CD8-positive, alpha-beta T cell (primary cell): ENCODE measurements at regions of chr1 and their contacts with region 1.

Region 1: DNA sequence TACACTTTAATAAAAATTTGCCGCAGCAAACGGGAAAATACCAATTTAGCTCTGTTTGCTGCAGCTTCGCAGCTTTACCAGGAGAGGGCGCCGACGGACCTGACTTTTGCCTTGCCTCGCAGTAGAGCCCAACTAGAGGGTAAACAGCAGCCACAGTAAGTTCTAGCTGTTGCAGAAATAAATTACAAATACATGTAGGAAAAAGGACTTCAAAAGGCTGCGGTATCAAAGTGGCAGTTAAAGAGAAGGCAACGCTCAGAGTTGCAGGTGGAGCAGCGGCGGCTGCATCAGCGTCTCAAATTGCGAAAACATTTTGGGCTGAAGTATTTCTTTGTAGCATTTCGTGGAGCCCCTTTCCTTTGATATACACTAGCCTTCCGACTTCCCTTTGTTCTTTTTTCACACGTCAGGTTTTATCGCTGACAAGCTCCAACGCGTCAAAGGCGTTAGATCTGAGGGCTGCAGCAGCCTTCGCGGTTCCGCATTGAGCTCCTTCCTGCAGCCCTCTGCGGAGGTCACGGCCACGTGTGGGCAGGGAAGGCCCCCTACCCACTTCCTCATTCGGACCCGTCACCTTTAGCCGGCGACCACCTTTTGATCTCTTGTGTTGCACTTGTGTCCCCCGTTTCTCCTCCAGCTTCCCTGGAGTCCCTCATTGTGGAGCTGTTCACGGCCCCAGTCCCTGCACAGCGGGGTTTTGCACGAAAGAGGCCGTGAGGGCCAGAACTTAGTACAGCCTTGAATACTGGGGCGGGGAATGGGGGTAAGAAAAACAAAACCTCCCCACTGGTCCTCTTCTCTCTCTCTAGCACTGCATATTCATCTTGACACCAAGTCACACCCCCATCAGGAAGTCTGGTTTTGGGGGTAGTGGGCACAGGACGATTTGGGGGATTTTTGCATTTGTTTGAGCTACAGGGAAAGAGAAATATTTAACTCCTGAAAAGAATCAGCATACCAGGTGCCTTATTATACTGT is 72.8 kb downstream of the S1PR1 start:
- DNase-seq: peak; percentile 57 to 96 (median 80)
- ATAC-seq: peak; percentile 75
- H3K4me3 ChIP-seq: peak overlapping the region; percentile 34 to 44
- H3K4me3 Mint-ChIP-seq: peak overlapping the region; percentile 82
- H3K27ac ChIP-seq: peak overlapping the region; percentile 82 to 87
- H3K27ac Mint-ChIP-seq: peak overlapping the region; percentile 99
- H3K4me1 ChIP-seq: peaks cover 58% of the 10 kb centered on the region
- H3K4me1 Mint-ChIP-seq: peaks cover 73% of the 10 kb centered on the region
- H3K27me3 ChIP-seq: no peaks in the 10 kb centered on the region
- H3K27me3 Mint-ChIP-seq: no peaks in the 10 kb centered on the region
- CTCF ChIP-seq: peak; percentile 85

Region 2: DNA sequence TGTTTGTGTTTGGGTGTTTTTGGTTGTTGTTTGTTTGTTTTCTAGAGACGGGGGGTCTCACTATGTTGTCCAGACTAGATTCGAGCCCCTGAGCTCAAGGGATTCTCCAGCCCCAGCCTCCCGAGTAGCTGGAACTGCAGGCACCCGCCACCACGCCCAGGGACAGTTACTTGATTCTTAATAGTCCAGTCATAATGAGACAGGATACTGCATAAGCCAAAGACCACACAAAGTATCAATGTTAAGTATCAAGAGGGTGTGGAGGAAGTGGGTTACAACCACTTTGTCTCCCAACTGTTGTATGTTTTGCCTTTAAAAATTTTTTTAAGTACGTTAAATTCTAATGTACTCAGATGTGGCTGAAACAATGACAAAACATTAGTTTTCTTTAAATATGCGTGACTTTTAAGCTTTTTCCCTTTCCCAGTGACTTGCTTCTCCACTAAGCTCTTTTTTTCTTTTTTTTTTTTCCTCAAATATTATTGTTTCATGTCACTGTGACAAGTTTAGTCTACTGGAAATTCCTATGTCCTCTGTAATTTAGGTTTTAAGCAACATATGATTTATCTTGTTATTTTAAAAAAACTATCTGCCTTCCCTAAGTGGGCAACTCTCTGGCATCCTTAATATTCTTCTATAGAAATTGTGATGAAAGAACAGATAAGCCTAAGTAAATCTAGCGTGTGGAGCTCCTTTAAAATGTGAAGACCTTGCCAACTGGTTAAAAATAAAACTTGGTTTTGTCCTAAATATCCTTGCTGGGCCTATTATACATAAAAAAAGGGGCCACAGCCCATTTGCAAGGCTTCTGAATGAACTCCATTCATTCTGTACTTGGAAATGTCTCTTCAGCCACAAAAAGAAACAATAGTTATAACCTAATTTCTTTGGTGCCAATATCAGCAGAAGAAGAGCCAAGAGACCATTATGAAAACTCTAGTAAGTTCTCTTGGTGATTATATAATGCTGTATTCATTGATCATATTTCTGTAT is 227.8 kb before region 1 on chr1:
- CTCF ChIA-PET with region 1: no interaction called
- POLR2A ChIA-PET with region 1: no interaction called
- intact Hi-C with region 1: no loop called
- DNase-seq: peak in 8 of 9 experiments; percentile 5 to 75 (median 34)
- ATAC-seq: peak; percentile 93
- H3K4me3 ChIP-seq: no peak overlapping the region
- H3K4me3 Mint-ChIP-seq: peak overlapping the region; percentile 56
- H3K27ac ChIP-seq: peak overlapping the region; percentile 14 to 36
- H3K27ac Mint-ChIP-seq: peak overlapping the region; percentile 85
- H3K4me1 ChIP-seq: peaks cover 35% of the 10 kb centered on the region
- H3K4me1 Mint-ChIP-seq: peaks cover 48% of the 10 kb centered on the region
- H3K27me3 ChIP-seq: no peaks in the 10 kb centered on the region
- H3K27me3 Mint-ChIP-seq: no peaks in the 10 kb centered on the region
- CTCF ChIP-seq: no peak

Region 3: GRCh38 chr1:101136739-101137138 is 172.9 kb before region 1 on chr1:
- CTCF ChIA-PET with region 1: interaction called, 3 read pairs
- POLR2A ChIA-PET with region 1: interaction called, 6 read pairs
- intact Hi-C with region 1: loop called in 1 of 2 experiments (anchors 1 kb)
- DNase-seq: peak in 4 of 9 experiments; percentile 21 to 78 (median 50)
- ATAC-seq: peak; percentile 76
- H3K4me3 ChIP-seq: no peak overlapping the region
- H3K4me3 Mint-ChIP-seq: peak overlapping the region; percentile 13
- H3K27ac ChIP-seq: peak overlapping the region; percentile 12 to 50
- H3K27ac Mint-ChIP-seq: peak overlapping the region; percentile 85
- H3K4me1 ChIP-seq: peaks cover 35% of the 10 kb centered on the region
- H3K4me1 Mint-ChIP-seq: peaks cover 60% of the 10 kb centered on the region
- H3K27me3 ChIP-seq: no peaks in the 10 kb centered on the region
- H3K27me3 Mint-ChIP-seq: no peaks in the 10 kb centered on the region
- CTCF ChIP-seq: peak; percentile 58

Region 4: GRCh38 chr1:101228424-101229134 is 81.0 kb before region 1 on chr1:
- CTCF ChIA-PET with region 1: no interaction called
- POLR2A ChIA-PET with region 1: no interaction called
- intact Hi-C with region 1: no loop called
- DNase-seq: no peak
- ATAC-seq: peak; percentile 44
- H3K4me3 ChIP-seq: no peak overlapping the region
- H3K4me3 Mint-ChIP-seq: no peak overlapping the region
- H3K27ac ChIP-seq: peak overlapping the region in 1 of 2 experiments; percentile 33
- H3K27ac Mint-ChIP-seq: no peak overlapping the region
- H3K4me1 ChIP-seq: no peaks in the 10 kb centered on the region
- H3K4me1 Mint-ChIP-seq: peaks cover 22% of the 10 kb centered on the region
- H3K27me3 ChIP-seq: no peaks in the 10 kb centered on the region
- H3K27me3 Mint-ChIP-seq: no peaks in the 10 kb centered on the region
- CTCF ChIP-seq: no peak

Region 5: GRCh38 chr1:101330427-101331130 is 21.0 kb after region 1 on chr1:
- CTCF ChIA-PET with region 1: interaction called, 44 read pairs
- POLR2A ChIA-PET with region 1: interaction called, 11 read pairs
- intact Hi-C with region 1: loop called in 1 of 2 experiments (anchors 2 kb)
- DNase-seq: no peak
- ATAC-seq: no peak
- H3K4me3 ChIP-seq: no peak overlapping the region
- H3K4me3 Mint-ChIP-seq: no peak overlapping the region
- H3K27ac ChIP-seq: peak overlapping the region in 1 of 2 experiments; percentile 22
- H3K27ac Mint-ChIP-seq: no peak overlapping the region
- H3K4me1 ChIP-seq: no peaks in the 10 kb centered on the region
- H3K4me1 Mint-ChIP-seq: peaks cover 11% of the 10 kb centered on the region
- H3K27me3 ChIP-seq: no peaks in the 10 kb centered on the region
- H3K27me3 Mint-ChIP-seq: no peaks in the 10 kb centered on the region
- CTCF ChIP-seq: no peak

Region 6: GRCh38 chr1:101357444-101357986 is 47.9 kb after region 1 on chr1:
- CTCF ChIA-PET with region 1: interaction called, 136 read pairs
- POLR2A ChIA-PET with region 1: interaction called, 40 read pairs
- intact Hi-C with region 1: loop called (anchors 1 kb)
- DNase-seq: peak; percentile 38 to 92 (median 67)
- ATAC-seq: peak; percentile 100
- H3K4me3 ChIP-seq: no peak overlapping the region
- H3K4me3 Mint-ChIP-seq: no peak overlapping the region
- H3K27ac ChIP-seq: no peak overlapping the region
- H3K27ac Mint-ChIP-seq: peak overlapping the region; percentile 28
- H3K4me1 ChIP-seq: peaks cover 6% of the 10 kb centered on the region
- H3K4me1 Mint-ChIP-seq: peaks cover 8% of the 10 kb centered on the region
- H3K27me3 ChIP-seq: no peaks in the 10 kb centered on the region
- H3K27me3 Mint-ChIP-seq: peaks cover 3% of the 10 kb centered on the region
- CTCF ChIP-seq: peak; percentile 87

Region 7: GRCh38 chr1:101438359-101438758 is 128.7 kb after region 1 on chr1:
- CTCF ChIA-PET with region 1: interaction called, 8 read pairs
- POLR2A ChIA-PET with region 1: no interaction called
- intact Hi-C with region 1: loop called (anchors 1 to 5 kb)
- DNase-seq: peak in 2 of 9 experiments; percentile 17 to 39
- ATAC-seq: no peak
- H3K4me3 ChIP-seq: no peak overlapping the region
- H3K4me3 Mint-ChIP-seq: no peak overlapping the region
- H3K27ac ChIP-seq: no peak overlapping the region
- H3K27ac Mint-ChIP-seq: no peak overlapping the region
- H3K4me1 ChIP-seq: no peaks in the 10 kb centered on the region
- H3K4me1 Mint-ChIP-seq: no peaks in the 10 kb centered on the region
- H3K27me3 ChIP-seq: no peaks in the 10 kb centered on the region
- H3K27me3 Mint-ChIP-seq: peaks cover 7% of the 10 kb centered on the region
- CTCF ChIP-seq: no peak

Region 8: DNA sequence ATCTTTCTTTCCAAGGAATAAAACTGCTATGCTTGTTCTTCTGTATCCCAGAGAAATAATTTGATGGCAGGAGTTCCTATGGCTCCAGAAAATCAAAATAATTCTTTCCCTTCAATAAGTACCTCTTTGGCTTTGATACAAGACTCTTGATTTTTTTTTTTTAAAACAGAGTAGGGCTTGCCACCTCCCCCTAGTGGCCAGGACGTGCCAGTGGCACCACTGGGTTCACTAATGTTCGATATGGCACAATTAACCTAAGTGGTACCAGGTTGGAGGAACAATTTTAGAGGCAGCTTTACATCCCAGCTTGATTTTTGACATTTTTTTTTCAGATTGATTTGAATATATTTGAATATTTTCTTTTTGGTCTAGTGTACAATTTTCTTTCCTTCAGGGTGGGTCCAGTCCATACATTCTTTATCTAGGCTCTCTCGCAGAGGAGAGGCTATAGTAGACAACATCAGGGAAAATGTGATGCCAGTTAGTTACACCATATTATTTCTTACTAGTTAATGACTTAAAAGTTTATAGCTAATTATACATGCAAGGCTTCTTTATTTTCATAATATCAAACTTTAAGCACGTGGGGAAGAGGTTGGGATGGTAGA is 258.1 kb after region 1 on chr1:
- CTCF ChIA-PET with region 1: interaction called, 4 read pairs
- POLR2A ChIA-PET with region 1: no interaction called
- intact Hi-C with region 1: loop called (anchors 1 to 5 kb)
- DNase-seq: peak; percentile 2 to 64 (median 48)
- ATAC-seq: peak; percentile 84
- H3K4me3 ChIP-seq: no peak overlapping the region
- H3K4me3 Mint-ChIP-seq: no peak overlapping the region
- H3K27ac ChIP-seq: no peak overlapping the region
- H3K27ac Mint-ChIP-seq: no peak overlapping the region
- H3K4me1 ChIP-seq: no peaks in the 10 kb centered on the region
- H3K4me1 Mint-ChIP-seq: no peaks in the 10 kb centered on the region
- H3K27me3 ChIP-seq: no peaks in the 10 kb centered on the region
- H3K27me3 Mint-ChIP-seq: peaks cover 3% of the 10 kb centered on the region
- CTCF ChIP-seq: peak; percentile 99